Panc1 (cell line): ENCODE measurements at regions of chr12 and their contacts with region 1.

Region 1: DNA sequence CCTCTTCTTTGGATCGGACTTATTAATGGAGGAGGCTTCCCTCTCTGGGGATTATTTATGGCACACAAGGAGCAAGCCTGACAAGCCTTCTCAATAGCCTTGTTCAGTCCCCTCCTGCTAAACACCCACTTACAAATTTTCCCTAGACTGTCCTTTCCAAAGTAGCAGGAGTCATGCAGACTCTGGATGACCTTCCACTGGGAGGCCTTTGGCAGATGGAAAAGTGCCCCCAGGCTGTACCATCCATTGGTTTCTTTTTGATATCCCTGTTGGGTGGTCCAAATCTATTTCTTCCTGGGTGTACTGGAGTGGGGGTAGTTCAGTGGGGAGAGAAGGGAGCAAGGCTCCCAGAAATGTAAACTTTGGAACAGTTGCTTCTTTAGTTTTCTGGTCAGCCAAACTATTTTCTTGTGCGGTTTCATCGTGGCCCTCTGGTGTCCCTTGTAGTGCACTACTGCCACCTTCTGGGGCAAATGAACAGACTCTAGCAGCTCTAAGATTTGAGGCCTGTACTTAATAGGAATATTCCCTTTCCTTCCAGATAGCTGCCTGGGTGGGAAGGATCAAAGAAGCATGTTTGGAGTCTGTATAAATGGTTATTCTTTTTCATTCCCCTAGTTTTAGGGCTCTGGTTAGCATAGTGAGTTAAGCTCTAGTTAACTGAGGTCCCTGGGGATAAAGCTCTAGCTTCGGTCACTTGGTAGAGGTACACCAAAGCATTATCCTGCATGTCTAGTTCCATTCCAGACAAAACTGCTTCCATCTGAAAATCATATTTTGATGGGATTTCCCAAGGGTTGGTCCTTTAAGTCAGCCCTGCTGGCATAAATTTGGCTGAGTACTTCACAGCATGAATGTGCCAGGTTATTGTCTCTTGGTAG is 409.5 kb downstream of the SLC6A15 start:
- DNase-seq: peak; percentile 25
- ATAC-seq: no peak; the same call in 1 of the 2 replicates
- H3K4me3 ChIP-seq: no peak overlapping the region
- H3K27ac ChIP-seq: no peak overlapping the region
- H3K4me1 ChIP-seq: no peaks in the 10 kb centered on the region
- H3K27me3 ChIP-seq: no peaks in the 10 kb centered on the region
- CTCF ChIP-seq: peak; percentile 73

Region 2: GRCh38 chr12:82685790-82686167 is 1817.4 kb before region 1 on chr12:
- CTCF ChIA-PET with region 1: no interaction called
- POLR2A ChIA-PET with region 1: no interaction called
- in situ Hi-C with region 1: no loop called
- intact Hi-C with region 1: loop called (anchors 10 kb)
- DNase-seq: peak; percentile 59
- ATAC-seq: peak; percentile 89
- H3K4me3 ChIP-seq: peak overlapping the region; percentile 73 to 86
- H3K27ac ChIP-seq: no peak overlapping the region; the same call in 1 of the 2 replicates
- H3K4me1 ChIP-seq: no peaks in the 10 kb centered on the region
- H3K27me3 ChIP-seq: peaks cover 6% of the 10 kb centered on the region
- CTCF ChIP-seq: peak; percentile 85

Region 3: DNA sequence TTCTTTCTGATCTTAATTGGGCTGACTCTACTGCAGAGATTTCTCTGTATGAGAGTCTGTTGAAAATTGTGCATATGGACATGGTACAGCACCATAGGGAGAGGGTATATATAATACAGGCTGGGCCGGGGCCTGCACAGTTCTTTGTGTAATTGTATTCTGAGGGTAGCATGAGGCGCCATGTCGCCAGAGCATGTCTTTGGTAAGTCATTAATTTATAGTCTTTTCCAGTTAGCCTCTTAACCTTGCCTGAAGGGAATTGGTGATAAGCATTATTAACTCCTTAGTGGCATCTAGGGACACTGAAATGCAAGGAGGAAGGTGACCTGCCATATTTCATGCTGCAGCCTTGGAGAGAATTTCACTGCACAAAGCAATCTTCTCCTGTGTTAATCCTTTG is 1246.6 kb before region 1 on chr12:
- CTCF ChIA-PET with region 1: no interaction called
- POLR2A ChIA-PET with region 1: interaction called, 11 read pairs
- in situ Hi-C with region 1: no loop called
- intact Hi-C with region 1: no loop called
- DNase-seq: no peak
- ATAC-seq: no peak
- H3K4me3 ChIP-seq: no peak overlapping the region
- H3K27ac ChIP-seq: no peak overlapping the region
- H3K4me1 ChIP-seq: no peaks in the 10 kb centered on the region
- H3K27me3 ChIP-seq: no peaks in the 10 kb centered on the region
- CTCF ChIP-seq: no peak

Region 4: GRCh38 chr12:83784298-83784890 is 718.8 kb before region 1 on chr12:
- CTCF ChIA-PET with region 1: no interaction called
- POLR2A ChIA-PET with region 1: no interaction called
- in situ Hi-C with region 1: no loop called
- intact Hi-C with region 1: no loop called
- DNase-seq: no peak
- ATAC-seq: no peak
- H3K4me3 ChIP-seq: no peak overlapping the region
- H3K27ac ChIP-seq: no peak overlapping the region
- H3K4me1 ChIP-seq: no peaks in the 10 kb centered on the region
- H3K27me3 ChIP-seq: no peaks in the 10 kb centered on the region
- CTCF ChIP-seq: no peak

Region 5: DNA sequence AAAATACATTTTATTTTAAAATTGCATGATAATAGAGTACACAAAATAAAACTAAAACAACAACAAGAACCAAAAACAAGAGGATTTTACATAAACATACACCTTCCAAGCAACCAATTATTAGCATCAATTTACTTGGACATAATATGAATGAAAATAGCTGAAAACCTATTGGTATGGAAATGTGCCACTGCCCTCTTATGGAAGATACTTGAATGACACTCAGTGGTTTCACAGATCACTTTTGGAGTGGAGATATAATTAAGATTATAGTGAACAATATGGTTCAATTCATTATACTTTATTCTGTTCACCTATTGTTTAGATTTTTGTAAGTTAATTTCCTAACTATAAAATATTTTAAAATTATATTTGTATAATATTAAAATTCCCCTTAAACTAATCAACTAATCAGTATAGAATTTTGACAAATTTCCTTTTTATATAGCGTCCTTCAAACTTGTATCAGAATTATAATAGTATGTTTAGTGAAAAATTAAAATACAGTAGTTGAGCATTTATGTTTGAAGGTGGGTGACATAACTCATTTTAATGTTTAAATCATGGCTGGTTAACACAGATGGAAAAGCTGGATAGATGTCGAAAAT is 339.4 kb after region 1 on chr12:
- CTCF ChIA-PET with region 1: no interaction called
- POLR2A ChIA-PET with region 1: no interaction called
- in situ Hi-C with region 1: no loop called
- intact Hi-C with region 1: loop called (anchors 10 kb)
- DNase-seq: peak; percentile 17
- ATAC-seq: no peak
- H3K4me3 ChIP-seq: no peak overlapping the region
- H3K27ac ChIP-seq: no peak overlapping the region
- H3K4me1 ChIP-seq: no peaks in the 10 kb centered on the region
- H3K27me3 ChIP-seq: no peaks in the 10 kb centered on the region
- CTCF ChIP-seq: peak; percentile 63; the same call in 1 of the 2 replicates

Region 6: DNA sequence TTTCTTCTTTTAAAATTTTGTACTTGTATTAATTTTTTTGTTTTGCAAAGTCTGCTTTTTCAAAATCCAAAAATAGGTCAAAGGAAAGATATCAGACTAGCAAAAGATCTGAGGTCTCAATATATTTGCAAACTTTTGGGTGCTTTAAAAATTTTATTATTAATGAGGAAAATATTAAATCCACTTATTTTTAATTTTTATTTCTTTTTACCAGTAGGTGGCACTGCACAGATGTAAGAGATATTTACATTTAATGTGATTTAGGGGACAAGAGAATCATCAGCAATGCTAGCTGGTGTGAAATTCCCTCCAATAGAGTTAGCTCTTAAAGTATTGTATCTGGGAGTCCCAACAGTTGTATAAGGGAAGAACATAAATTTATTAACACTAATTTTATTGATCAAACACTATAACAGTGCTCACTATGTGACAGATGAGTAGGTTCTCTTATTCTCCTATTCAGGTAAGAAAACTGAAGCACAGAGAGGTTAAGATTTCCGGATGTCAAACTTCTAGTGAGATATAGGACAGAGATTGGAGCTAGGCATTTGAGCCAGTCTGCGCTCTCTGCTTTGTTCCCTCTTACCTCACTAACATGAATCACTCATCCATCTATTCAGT is 807.4 kb after region 1 on chr12:
- CTCF ChIA-PET with region 1: no interaction called
- POLR2A ChIA-PET with region 1: no interaction called
- in situ Hi-C with region 1: no loop called
- intact Hi-C with region 1: no loop called
- DNase-seq: no peak
- ATAC-seq: no peak
- H3K4me3 ChIP-seq: no peak overlapping the region
- H3K27ac ChIP-seq: no peak overlapping the region
- H3K4me1 ChIP-seq: no peaks in the 10 kb centered on the region
- H3K27me3 ChIP-seq: no peaks in the 10 kb centered on the region
- CTCF ChIP-seq: peak; percentile 46; the same call in 1 of the 2 replicates